CD8-positive, alpha-beta memory T cell (primary cell): ENCODE measurements at regions of chr4 and their contacts with region 1.

Region 1: GRCh38 chr4:6673660-6674499 is 19.8 kb upstream of the S100P start:
- DNase-seq: peak; percentile 92 to 97 (median 95)
- H3K4me3 ChIP-seq: peak overlapping the region; percentile 65
- H3K4me3 Mint-ChIP-seq: peak overlapping the region; percentile 95 to 99 (median 97)
- H3K27ac ChIP-seq: peak overlapping the region; percentile 84
- H3K27ac Mint-ChIP-seq: peak overlapping the region; percentile 97 to 99 (median 98)
- H3K4me1 ChIP-seq: peaks cover 30% of the 10 kb centered on the region
- H3K4me1 Mint-ChIP-seq: peaks cover 50 to 51% (median 50%) of the 10 kb centered on the region in 3 donors
- H3K27me3 ChIP-seq: no peaks in the 10 kb centered on the region
- H3K27me3 Mint-ChIP-seq: peaks cover 0 to 3% of the 10 kb centered on the region in 2 donors

Region 2: GRCh38 chr4:6582889-6583490 is 90.9 kb before region 1 on chr4:
- CTCF ChIA-PET with region 1: no interaction called
- POLR2A ChIA-PET with region 1: no interaction called
- DNase-seq: no peak
- H3K4me3 ChIP-seq: no peak overlapping the region
- H3K4me3 Mint-ChIP-seq: no peak overlapping the region
- H3K27ac ChIP-seq: no peak overlapping the region
- H3K27ac Mint-ChIP-seq: no peak overlapping the region
- H3K4me1 ChIP-seq: no peaks in the 10 kb centered on the region
- H3K4me1 Mint-ChIP-seq: peaks cover 0 to 7% (median 4%) of the 10 kb centered on the region in 3 donors
- H3K27me3 ChIP-seq: no peaks in the 10 kb centered on the region
- H3K27me3 Mint-ChIP-seq: no peaks in the 10 kb centered on the region

Region 3: DNA sequence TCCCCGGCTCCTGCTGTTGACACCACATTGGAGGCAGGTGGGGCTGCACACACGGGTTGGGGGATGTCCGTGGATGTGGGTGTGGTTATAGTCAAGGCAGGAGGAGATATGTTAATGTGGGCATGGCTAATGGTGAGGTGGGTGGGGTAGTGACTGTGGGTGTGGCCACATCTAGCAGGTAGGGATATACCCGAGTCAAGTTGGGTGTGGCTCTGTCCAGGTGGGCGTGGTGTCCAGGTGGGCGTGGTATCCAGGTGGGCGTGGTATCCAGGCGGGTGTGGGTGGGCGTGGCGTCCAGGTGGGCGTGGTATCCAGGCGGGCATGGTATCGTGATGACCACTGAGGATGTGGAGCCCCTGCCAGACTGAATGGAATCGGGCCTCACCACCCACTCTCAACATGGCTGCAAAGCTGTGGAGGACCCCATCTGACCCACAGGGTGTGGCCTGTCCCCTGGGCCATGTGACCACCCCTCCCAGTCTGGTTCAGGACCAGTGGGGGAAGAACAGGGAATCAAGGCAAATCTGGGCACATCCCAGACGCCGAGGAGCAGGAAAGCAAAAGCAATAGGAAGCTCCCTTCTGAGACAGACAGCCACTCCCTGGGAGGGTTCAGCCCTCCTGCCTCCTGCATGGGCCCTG is 77.9 kb before region 1 on chr4:
- CTCF ChIA-PET with region 1: no interaction called
- POLR2A ChIA-PET with region 1: no interaction called
- DNase-seq: no peak
- H3K4me3 ChIP-seq: no peak overlapping the region
- H3K4me3 Mint-ChIP-seq: no peak overlapping the region
- H3K27ac ChIP-seq: no peak overlapping the region
- H3K27ac Mint-ChIP-seq: peak overlapping the region in 1 of 8 donors; percentile 68
- H3K4me1 ChIP-seq: no peaks in the 10 kb centered on the region
- H3K4me1 Mint-ChIP-seq: no peaks in the 10 kb centered on the region
- H3K27me3 ChIP-seq: no peaks in the 10 kb centered on the region
- H3K27me3 Mint-ChIP-seq: no peaks in the 10 kb centered on the region

Region 4: DNA sequence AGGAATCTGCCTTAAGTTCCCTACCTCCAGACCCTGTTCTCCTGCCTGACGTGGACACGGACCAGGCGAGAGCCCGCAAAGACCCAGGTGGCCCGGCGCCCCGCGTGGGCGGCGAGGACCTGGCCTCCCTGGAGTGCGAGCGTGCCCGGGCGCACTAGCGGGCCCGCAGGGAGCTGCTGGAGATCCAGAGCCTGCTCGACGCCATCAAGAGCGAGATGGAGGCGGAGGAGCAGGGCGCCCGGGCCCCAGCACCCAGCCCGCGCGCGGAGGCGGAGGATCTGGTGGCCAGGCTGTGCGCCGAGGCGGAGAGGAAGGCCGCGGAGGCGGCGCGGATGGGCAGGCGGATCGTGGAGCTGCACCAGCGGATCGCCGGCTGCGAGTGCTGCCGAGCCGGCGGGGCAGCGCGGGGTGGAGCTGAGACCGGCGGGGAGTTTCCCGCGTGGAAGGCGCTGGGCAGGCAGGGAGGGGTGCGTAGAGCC is 15.2 kb before region 1 on chr4:
- CTCF ChIA-PET with region 1: interaction called, 7 read pairs
- POLR2A ChIA-PET with region 1: interaction called, 11 read pairs
- DNase-seq: peak; percentile 30 to 67 (median 52)
- H3K4me3 ChIP-seq: peak overlapping the region; percentile 5
- H3K4me3 Mint-ChIP-seq: peak overlapping the region; percentile 54 to 85 (median 69)
- H3K27ac ChIP-seq: no peak overlapping the region
- H3K27ac Mint-ChIP-seq: peak overlapping the region in 4 of 8 donors; percentile 7 to 77 (median 52)
- H3K4me1 ChIP-seq: peaks cover 7% of the 10 kb centered on the region
- H3K4me1 Mint-ChIP-seq: peaks cover 6 to 15% (median 7%) of the 10 kb centered on the region in 3 donors
- H3K27me3 ChIP-seq: no peaks in the 10 kb centered on the region
- H3K27me3 Mint-ChIP-seq: peaks cover 8 to 16% of the 10 kb centered on the region in 2 donors

Region 5: DNA sequence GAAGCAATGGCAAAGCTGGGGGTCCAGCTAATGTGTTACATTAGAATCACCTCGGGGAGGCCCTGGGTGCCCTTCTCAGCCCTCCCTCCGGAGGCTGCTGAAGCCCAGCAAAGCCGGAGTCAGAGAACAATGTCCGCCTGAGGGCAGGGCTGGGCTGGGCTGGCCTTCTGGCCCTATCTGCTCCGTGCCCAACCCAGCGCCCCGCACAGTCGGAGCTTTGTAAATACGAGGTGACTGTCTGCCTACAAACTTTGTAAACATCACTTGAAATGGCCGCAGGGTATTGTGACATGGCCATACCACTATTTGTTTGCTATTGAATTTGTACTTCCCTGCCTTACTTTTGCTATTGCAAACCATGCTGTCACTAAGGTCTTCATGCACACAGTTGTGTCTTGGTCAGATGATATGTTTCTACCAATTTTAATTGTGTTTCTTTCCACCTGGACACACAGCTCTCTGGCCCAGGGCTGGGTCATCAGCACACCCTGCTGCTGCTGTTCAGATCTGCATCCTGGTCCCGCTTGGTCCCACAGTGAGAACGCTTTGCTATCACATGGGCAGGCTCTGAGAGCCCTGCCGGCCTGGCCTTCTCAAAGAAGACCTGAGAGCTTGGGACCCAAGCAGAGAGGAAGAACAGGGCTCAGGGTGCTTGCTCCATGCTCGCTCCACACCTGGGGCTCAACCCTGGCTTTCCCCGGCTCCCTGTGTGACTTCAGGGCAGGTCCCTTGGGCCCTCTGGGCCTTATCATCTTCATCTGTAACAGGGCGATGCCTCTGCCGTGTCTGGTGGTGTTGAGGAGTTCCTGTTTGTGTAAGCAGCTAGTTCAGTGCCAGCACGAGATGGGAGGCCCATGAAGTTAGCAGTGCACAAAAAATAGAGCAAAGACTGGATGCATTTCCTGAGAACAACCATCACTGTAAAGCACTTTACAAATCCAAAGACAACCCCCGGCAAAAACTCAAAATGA is 22.1 kb after region 1 on chr4:
- CTCF ChIA-PET with region 1: interaction called, 369 read pairs
- POLR2A ChIA-PET with region 1: interaction called, 77 read pairs
- DNase-seq: peak; percentile 47 to 80 (median 71)
- H3K4me3 ChIP-seq: peak overlapping the region; percentile 45
- H3K4me3 Mint-ChIP-seq: peak overlapping the region; percentile 5 to 92 (median 65)
- H3K27ac ChIP-seq: peak overlapping the region; percentile 40
- H3K27ac Mint-ChIP-seq: peak overlapping the region; percentile 86 to 99 (median 95)
- H3K4me1 ChIP-seq: peaks cover 89% of the 10 kb centered on the region
- H3K4me1 Mint-ChIP-seq: peaks cover 74 to 88% (median 85%) of the 10 kb centered on the region in 3 donors
- H3K27me3 ChIP-seq: no peaks in the 10 kb centered on the region
- H3K27me3 Mint-ChIP-seq: peaks cover 0 to 3% of the 10 kb centered on the region in 2 donors

Region 6: DNA sequence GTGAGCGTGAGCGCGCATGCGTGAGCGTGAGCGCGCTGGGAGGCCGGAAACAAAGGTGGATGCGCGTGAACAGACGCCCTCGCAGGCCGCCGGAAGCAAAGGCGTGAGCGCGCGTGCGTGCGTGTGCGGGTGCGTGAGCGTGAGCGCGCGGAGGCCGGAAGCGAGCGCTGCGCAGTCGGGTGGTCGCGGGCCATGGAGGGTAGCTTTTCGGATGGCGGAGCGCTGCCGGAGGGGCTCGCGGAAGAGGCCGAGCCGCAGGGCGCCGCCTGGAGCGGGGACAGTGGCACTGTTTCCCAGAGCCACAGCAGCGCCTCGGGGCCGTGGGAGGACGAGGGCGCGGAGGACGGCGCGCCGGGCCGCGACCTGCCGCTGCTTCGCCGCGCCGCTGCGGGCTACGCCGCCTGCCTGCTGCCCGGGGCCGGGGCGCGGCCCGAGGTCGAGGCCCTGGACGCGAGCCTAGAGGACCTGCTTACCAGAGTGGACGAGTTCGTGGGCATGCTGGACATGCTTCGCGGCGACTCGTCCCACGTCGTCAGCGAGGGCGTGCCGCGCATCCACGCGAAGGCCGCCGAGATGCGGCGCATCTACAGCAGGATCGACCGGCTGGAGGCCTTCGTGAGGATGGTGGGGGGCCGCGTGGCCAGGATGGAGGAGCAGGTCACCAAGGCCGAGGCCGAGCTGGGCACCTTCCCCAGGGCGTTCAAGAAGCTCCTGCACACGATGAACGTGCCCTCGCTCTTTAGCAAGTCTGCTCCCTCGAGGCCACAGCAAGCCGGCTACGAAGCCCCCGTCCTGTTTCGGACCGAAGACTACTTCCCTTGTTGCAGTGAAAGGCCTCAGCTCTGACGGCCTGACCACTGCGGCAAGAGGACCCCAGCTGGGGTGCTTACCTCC is 42.4 kb after region 1 on chr4 and contains the start of gene BLOC1S4:
- CTCF ChIA-PET with region 1: interaction called, 369 read pairs
- POLR2A ChIA-PET with region 1: interaction called, 50 read pairs
- DNase-seq: peak; percentile 83 to 94 (median 92)
- H3K4me3 ChIP-seq: peak within 1 kb of the TSS; percentile 78
- H3K4me3 Mint-ChIP-seq: peak within 1 kb of the TSS; percentile 93 to 97 (median 96)
- H3K27ac ChIP-seq: peak within 1 kb of the TSS; percentile 80
- H3K27ac Mint-ChIP-seq: peak within 1 kb of the TSS; percentile 92 to 98 (median 96)
- H3K4me1 ChIP-seq: peaks cover 34% of the 10 kb centered on the region
- H3K4me1 Mint-ChIP-seq: peaks cover 29 to 48% (median 48%) of the 10 kb centered on the region in 3 donors
- H3K27me3 ChIP-seq: no peaks in the 10 kb centered on the region
- H3K27me3 Mint-ChIP-seq: no peaks in the 10 kb centered on the region
- total RNA-seq, gene BLOC1S4: 21.5 to 22.9 TPM

Region 7: DNA sequence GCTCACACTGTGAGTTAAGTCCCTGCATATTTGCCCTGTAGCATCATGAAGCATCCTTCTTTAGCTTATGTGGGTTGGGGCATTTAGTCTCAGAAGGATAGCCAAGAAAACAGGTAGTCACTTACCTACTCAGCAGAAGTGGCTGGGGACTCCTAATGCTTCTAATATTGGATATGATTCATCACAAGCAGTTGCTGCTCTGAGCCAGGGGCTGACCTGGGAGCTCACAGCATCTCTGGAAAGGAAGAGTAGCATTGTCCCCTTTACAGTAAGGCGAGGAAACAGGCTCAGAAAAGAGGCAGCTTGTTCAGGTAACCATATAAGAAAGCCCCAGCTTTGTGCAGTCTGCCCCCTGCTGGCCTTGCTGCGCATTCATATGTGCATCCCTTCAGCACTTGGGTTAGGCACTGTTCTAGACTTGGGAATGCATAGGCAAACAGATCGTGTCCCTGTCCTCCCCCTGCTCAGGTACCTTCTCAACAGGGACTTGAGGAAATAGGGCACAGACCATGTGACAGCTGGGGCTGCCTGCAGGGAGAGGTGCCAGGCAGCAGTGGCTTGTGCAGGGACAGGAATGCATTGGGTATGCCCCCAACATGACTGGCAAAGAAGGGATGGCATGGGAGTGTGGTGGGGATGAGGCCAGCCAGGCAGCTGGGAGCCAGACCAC is 200.0 kb after region 1 on chr4:
- CTCF ChIA-PET with region 1: interaction called, 34 read pairs
- POLR2A ChIA-PET with region 1: no interaction called
- DNase-seq: peak; percentile 64 to 85 (median 70)
- H3K4me3 ChIP-seq: no peak overlapping the region
- H3K4me3 Mint-ChIP-seq: no peak overlapping the region
- H3K27ac ChIP-seq: no peak overlapping the region
- H3K27ac Mint-ChIP-seq: peak overlapping the region in 4 of 8 donors; percentile 26 to 70 (median 58)
- H3K4me1 ChIP-seq: no peaks in the 10 kb centered on the region
- H3K4me1 Mint-ChIP-seq: peaks cover 0 to 6% (median 5%) of the 10 kb centered on the region in 3 donors
- H3K27me3 ChIP-seq: no peaks in the 10 kb centered on the region
- H3K27me3 Mint-ChIP-seq: peaks cover 0 to 2% of the 10 kb centered on the region in 2 donors

Region 8: GRCh38 chr4:7371210-7371941 is 697.5 kb after region 1 on chr4:
- CTCF ChIA-PET with region 1: no interaction called
- POLR2A ChIA-PET with region 1: no interaction called
- DNase-seq: no peak
- H3K4me3 ChIP-seq: no peak overlapping the region
- H3K4me3 Mint-ChIP-seq: no peak overlapping the region
- H3K27ac ChIP-seq: no peak overlapping the region
- H3K27ac Mint-ChIP-seq: no peak overlapping the region
- H3K4me1 ChIP-seq: no peaks in the 10 kb centered on the region
- H3K4me1 Mint-ChIP-seq: no peaks in the 10 kb centered on the region
- H3K27me3 ChIP-seq: no peaks in the 10 kb centered on the region
- H3K27me3 Mint-ChIP-seq: peaks cover 13 to 21% of the 10 kb centered on the region in 2 donors